Activated CD4-positive, alpha-beta T cell treated with anti-CD3 and anti-CD28 coated beads for 36 hours (primary cell): ENCODE measurements at regions of chr6 and their contacts with region 1.

Region 1: GRCh38 chr6:129621247-129621646 is 88.7 kb downstream of the ARHGAP18 start:
- DNase-seq: peak; percentile 60
- ATAC-seq: peak; percentile 64
- H3K4me3 Mint-ChIP-seq: no peak overlapping the region
- H3K27ac Mint-ChIP-seq: no peak overlapping the region
- H3K4me1 Mint-ChIP-seq: no peaks in the 10 kb centered on the region
- H3K27me3 Mint-ChIP-seq: no peaks in the 10 kb centered on the region

Region 2: DNA sequence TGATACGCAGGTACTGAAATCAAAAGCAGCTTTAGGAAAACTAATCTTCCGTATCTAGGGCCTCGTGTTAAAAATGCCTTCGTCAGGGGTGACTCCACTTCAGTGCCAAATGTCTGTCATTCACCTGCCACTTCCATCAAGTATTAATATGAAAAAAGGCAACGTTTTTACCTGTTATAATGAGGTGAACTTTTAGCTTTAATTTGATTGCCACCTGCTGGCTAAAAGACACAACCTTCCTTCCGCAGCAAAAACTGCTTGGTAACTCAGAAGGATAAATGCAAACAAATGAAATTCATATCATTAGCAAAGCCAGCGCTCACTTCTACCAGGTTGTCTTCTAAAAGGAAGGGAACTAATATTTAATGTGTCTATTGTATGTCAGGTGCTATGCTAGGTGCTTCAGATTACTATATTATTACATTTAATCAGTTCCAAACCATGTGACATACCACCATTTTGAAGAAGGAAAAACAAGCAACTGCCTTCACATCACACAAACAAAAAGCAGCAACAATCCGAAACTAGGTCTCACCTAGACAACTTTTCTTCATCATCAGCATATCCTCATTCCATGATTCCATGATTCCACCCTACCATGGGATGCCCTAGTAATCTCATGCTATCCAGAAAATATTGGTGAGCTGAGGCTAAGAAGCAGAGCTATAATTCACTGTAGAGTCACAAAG is 109.4 kb after region 1 on chr6:
- CTCF ChIA-PET with region 1: interaction called, 6 read pairs
- POLR2A ChIA-PET with region 1: no interaction called
- intact Hi-C with region 1: loop called in 1 of 2 experiments (anchors 1 kb)
- DNase-seq: peak; percentile 27
- ATAC-seq: peak; percentile 39
- H3K4me3 Mint-ChIP-seq: no peak overlapping the region
- H3K27ac Mint-ChIP-seq: peak overlapping the region; percentile 68
- H3K4me1 Mint-ChIP-seq: peaks cover 9% of the 10 kb centered on the region
- H3K27me3 Mint-ChIP-seq: no peaks in the 10 kb centered on the region